ENCODE measurements at regions of chr6 and their contacts with region 1.

Region 1: DNA sequence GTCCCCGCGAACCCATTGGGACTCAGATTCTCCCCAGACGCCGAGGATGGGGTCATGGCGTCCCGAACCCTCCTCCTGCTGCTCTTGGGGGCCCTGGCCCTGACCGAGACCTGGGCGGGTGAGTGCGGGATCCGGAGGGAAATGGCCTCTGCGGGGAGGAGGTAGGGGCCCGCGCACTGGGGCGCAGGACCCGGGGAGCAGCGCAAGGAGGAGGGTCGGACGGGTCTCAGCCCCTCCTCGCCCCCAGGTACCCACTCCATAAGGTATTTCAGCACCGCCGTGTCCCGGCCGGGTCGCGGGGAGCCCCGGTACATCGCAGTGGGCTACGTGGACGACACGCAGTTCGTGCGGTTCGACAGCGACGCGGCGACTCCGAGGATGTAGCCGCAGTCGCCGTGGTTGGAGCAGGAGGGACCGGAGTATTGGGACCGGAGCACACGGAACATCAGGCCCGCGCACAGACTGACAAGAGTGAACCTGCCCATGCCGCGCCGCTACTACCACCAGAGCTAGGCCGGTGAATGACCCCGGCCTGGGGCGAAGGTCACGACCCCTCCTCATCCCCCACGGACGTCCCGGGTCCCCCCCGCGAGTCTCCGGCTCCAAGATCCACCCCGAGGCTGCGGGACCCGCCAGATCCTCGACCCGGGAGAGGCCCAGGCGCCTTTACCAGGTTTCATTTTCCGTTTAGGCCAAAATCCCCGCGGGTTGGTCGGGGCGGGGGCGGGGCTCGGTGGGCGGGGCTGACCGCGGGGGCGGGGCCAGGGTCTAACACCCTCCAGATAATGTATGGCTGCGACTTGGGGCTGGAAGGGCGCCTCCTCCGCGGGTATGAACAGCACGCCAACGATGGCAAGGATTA is 15.7 kb upstream of the HLA-A start:
- DNase-seq: peak; percentile 89
- ATAC-seq: peak; percentile 84
- H3K4me3 ChIP-seq: peak overlapping the region; percentile 59 to 88 (median 74)
- H3K4me3 Mint-ChIP-seq: peak overlapping the region; percentile 93
- H3K27ac ChIP-seq: peak overlapping the region; percentile 91 to 93
- H3K27ac Mint-ChIP-seq: peak overlapping the region; percentile 95
- H3K4me1 ChIP-seq: peaks cover 4 to 17% of the 10 kb centered on the region in 2 donors
- H3K4me1 Mint-ChIP-seq: peaks cover 14% of the 10 kb centered on the region
- H3K27me3 ChIP-seq: no peaks in the 10 kb centered on the region
- H3K27me3 Mint-ChIP-seq: no peaks in the 10 kb centered on the region
- CTCF ChIP-seq: no peak

Region 2: DNA sequence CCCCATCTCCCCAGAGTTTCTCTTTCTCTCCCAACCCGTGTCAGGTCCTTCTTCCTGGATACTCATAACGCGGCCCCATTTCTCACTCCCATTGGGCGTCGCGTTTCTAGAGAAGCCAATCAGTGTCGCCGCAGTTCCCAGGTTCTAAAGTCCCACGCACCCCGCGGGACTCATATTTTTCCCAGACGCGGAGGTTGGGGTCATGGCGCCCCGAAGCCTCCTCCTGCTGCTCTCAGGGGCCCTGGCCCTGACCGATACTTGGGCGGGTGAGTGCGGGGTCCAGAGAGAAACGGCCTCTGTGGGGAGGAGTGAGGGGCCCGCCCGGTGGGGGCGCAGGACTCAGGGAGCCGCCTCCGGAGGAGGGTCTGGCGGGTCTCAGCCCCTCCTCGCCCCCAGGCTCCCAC is 203.4 kb before region 1 on chr6 and contains the start of gene HLA-F:
- CTCF ChIA-PET with region 1: no interaction called
- POLR2A ChIA-PET with region 1: no interaction called
- intact Hi-C with region 1: loop called (anchors 5 kb)
- DNase-seq: peak; percentile 96
- ATAC-seq: peak; percentile 91
- H3K4me3 ChIP-seq: peak within 1 kb of the TSS; percentile 75 to 100 (median 100)
- H3K4me3 Mint-ChIP-seq: peak within 1 kb of the TSS; percentile 96
- H3K27ac ChIP-seq: peak within 1 kb of the TSS; percentile 99 to 100
- H3K27ac Mint-ChIP-seq: peak within 1 kb of the TSS; percentile 98
- H3K4me1 ChIP-seq: peaks cover 29 to 43% of the 10 kb centered on the region in 2 donors
- H3K4me1 Mint-ChIP-seq: peaks cover 55% of the 10 kb centered on the region
- H3K27me3 ChIP-seq: no peaks in the 10 kb centered on the region
- H3K27me3 Mint-ChIP-seq: no peaks in the 10 kb centered on the region
- CTCF ChIP-seq: no peak
- total RNA-seq, gene HLA-F: 895 and 911 TPM in 2 replicates

Region 3: GRCh38 chr6:29887819-29888776 is 38.5 kb before region 1 on chr6:
- CTCF ChIA-PET with region 1: no interaction called
- POLR2A ChIA-PET with region 1: interaction called, 3 read pairs
- intact Hi-C with region 1: loop called (anchors 2 kb)
- DNase-seq: peak; percentile 93
- ATAC-seq: peak; percentile 84
- H3K4me3 ChIP-seq: peak overlapping the region; percentile 31 to 93 (median 90)
- H3K4me3 Mint-ChIP-seq: peak overlapping the region; percentile 94
- H3K27ac ChIP-seq: peak overlapping the region; percentile 92 to 95
- H3K27ac Mint-ChIP-seq: peak overlapping the region; percentile 96
- H3K4me1 ChIP-seq: peaks cover 7 to 23% of the 10 kb centered on the region in 2 donors
- H3K4me1 Mint-ChIP-seq: peaks cover 11% of the 10 kb centered on the region
- H3K27me3 ChIP-seq: no peaks in the 10 kb centered on the region
- H3K27me3 Mint-ChIP-seq: no peaks in the 10 kb centered on the region
- CTCF ChIP-seq: no peak

Measured in B cell (primary cell).